Activated naive CD4-positive, alpha-beta T cell treated with anti-CD3 and anti-CD28 coated beads, Interleukin-2, amount 10 ng/mL, durations not matched to agents 7 days and 5 days (primary cell): ENCODE measurements at regions of chr22 and their contacts with region 1.

Region 1: DNA sequence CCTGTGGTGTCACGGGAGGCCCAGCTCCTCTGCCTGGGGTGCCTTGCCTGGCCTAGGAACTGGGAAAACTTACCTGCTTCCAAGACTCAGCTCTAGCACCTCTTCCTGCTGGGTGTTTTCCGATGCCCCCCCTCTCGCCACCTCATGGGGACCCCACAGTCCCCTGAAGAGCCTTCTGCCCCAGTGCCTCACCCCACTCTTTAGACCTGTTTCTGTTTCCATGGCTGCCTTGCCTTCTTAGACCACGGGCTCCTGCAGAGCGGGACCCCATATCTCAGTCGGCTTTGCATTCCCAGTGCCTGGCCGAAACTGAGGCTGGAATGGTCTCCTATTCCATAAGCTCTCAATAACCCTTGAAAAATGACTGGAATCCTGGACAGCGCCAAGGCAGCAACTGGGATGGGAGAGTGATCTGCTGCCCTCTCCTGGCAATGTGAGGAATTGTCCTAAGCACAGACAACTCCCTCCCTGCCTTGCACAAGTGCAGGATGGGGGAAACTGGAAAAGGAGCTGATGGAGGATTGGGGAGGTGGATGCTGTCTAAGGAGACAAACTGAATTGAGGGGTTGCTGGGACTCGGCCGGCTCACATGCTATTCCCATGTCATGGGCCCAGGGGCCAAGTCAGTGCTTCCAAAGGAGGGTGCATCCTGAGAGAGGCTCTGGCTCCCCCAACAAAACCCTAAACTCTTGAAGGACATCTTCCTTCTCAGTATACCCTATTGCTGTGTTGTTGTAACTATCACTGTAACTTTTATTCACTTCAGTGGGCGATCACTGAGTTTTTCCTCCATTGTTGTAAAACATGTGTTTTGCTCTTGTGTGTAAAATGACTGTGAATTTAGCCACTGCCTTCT is 26.6 kb upstream of the IL17RA start:
- DNase-seq: peak; percentile 67
- H3K4me3 Mint-ChIP-seq: no peak overlapping the region
- H3K27ac Mint-ChIP-seq: no peak overlapping the region
- H3K4me1 Mint-ChIP-seq: peaks cover 2% of the 10 kb centered on the region
- H3K27me3 Mint-ChIP-seq: peaks cover 13% of the 10 kb centered on the region

Region 2: DNA sequence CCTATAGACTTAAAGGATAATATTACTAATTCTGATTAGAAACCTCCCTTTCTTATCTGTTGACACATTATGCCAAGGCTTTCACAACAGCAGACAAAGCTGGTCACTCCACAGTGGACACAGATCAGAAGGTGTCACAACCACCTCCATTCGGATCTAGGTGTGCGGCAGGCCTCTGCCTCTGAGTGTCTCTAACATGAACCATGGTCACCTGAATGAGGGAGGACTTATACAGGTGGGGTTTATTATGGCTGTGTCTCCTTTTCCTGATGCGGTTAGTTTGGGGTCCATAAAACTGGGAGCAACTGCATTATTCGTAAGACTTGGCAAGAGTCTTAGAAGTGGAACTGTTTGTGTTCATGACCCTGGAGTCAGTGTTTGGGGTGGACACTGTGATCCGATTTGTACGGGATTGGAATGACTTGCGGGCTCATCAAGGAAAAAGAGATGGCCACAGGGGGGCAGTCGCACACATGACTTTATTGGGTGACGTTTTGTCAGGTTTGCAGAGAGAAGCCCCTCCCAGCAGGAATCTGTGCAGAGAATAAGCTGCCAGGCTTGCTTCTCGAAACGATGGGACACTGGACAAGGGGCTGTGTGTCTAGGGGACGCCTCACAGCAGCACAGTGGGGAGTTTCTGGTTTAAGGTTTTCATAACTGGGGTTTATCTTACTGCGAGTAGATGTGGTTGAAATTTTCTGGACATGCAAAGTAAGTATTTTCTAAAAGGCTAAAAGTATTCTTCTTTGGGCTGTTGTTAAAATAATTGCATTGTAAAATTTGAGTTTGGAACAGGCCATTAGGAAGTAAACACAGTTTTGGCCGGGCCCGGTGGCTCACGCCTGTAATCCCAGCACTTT is 140.8 kb before region 1 on chr22:
- CTCF ChIA-PET with region 1: interaction called, 51 read pairs
- DNase-seq: peak; percentile 75
- H3K4me3 Mint-ChIP-seq: no peak overlapping the region
- H3K27ac Mint-ChIP-seq: no peak overlapping the region
- H3K4me1 Mint-ChIP-seq: no peaks in the 10 kb centered on the region
- H3K27me3 Mint-ChIP-seq: peaks cover 46% of the 10 kb centered on the region

Region 3: DNA sequence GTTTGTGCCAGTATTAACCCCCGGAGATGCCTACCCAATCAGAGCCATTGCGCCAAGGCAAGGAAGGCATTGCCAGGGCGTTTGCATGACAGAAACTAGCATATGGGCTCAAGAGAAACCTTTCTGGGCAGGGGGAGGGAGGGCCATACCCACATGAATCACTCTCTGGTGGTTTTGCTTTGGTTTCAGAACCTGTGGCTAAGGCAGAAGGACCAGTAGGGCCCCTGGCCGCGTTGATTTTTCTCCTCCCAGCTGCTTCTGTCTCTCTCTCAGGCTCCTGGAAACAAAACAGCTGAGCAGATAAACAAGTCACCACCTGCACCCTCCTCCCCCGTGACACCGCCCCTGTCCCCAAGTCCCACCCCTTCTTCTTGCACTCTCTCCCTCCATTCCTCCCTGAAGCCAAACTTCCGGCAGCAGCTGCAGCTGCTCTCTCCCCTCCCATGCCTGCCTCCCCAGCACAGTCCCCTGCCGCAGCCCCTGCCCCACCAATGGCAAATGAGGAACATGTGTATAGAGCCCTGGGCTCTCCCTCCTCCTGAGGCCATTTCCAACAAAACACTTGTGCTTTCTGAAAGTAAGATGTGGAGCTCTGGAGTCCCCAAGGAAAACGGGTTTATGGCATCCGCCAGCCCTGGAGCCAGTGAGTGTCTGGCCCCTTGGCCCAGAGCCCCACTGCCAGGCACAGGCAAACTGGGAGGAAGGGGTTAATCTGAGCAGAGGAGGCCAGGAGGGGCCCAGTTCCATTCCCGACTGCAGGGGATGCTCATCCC is 200.0 kb after region 1 on chr22:
- CTCF ChIA-PET with region 1: no interaction called
- DNase-seq: peak; percentile 90
- H3K4me3 Mint-ChIP-seq: peak overlapping the region; percentile 48
- H3K27ac Mint-ChIP-seq: peak overlapping the region; percentile 90
- H3K4me1 Mint-ChIP-seq: peaks cover 38% of the 10 kb centered on the region
- H3K27me3 Mint-ChIP-seq: peaks cover 25% of the 10 kb centered on the region